ENCODE measurements at regions of chr17 and their contacts with region 1.

Region 1: GRCh38 chr17:41548844-41549595 is 20.9 kb upstream of the KRT19 start:
- DNase-seq: peak; percentile 74
- H3K4me3 ChIP-seq: no peak overlapping the region
- H3K27ac ChIP-seq: peak overlapping the region; percentile 50
- H3K4me1 ChIP-seq: no peaks in the 10 kb centered on the region
- H3K27me3 ChIP-seq: no peaks in the 10 kb centered on the region
- CTCF ChIP-seq: peak; percentile 74

Region 2: DNA sequence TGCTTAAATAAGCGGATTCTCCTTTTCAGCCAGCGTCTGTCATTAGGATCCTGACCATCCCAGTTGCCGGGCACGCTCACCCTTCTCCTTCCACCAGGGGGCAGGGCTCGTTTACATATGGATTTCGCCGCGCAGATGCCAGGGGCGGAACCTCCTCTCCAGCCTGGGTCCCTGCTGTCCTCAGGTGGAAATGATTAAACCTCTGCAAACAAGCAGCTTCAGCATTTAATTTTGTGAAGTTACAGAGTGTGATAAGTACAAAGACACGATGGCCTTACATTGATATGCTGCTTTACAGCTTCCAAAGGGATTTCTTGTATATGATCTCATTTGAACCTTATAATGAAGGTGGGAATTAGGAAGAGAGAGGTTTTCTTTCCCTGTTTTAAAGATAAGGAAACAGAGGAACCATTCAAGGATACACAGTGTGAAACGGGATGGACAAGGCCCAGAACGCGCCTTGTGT is 745.4 kb before region 1 on chr17:
- CTCF ChIA-PET with region 1: no interaction called
- POLR2A ChIA-PET with region 1: no interaction called
- intact Hi-C with region 1: loop called (anchors 5 kb)
- DNase-seq: peak; percentile 80
- H3K4me3 ChIP-seq: no peak overlapping the region
- H3K27ac ChIP-seq: no peak overlapping the region
- H3K4me1 ChIP-seq: no peaks in the 10 kb centered on the region
- H3K27me3 ChIP-seq: no peaks in the 10 kb centered on the region
- CTCF ChIP-seq: peak; percentile 77